AG04450 (cell line): ENCODE measurements at regions of chr17 and their contacts with region 1.

Region 1: DNA sequence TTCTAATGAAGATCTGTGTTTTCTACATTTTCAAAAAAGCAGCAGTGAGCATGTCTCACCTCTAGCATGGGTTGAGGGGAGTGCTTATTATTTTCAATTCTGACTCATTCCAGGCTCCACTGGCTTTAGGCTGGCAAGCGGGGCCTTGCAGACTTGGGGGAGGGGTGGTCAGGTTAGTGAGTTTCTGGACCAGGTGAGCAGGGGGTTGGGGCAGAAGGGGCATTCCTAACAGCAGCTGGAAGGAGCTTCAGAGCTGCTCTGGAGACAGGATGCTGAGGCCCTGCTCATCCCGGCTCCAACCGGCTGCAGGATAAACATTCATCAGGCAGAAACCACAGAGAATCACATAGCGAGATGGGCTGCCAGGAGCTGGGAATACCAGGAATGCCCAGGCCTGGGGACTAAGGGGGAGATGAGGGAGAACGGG is 10.5 kb upstream of the KRT19 start:
- DNase-seq: no peak
- H3K4me3 ChIP-seq: no peak overlapping the region
- H3K27ac ChIP-seq: peak overlapping the region; percentile 61
- H3K27me3 ChIP-seq: no peaks in the 10 kb centered on the region
- CTCF ChIP-seq: no peak

Region 2: DNA sequence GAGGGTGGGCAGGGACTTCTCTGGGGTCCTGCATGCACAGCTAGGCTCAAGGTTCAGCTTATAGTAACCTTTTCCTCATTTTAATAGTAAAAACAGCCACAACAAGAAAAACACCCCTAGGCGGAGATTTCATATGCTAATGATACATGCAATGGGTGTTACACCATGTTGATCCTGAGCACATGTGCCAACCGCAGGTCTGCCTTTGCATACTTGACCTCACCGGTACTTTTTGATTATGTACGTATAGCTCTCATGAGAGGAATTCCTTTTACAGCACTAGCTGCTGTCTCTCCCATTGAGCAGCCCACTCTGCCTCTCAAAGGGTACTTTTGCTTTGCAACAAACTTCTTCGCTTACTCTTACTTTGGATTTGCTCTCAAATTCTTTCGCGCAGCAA is 442.5 kb before region 1 on chr17:
- CTCF ChIA-PET with region 1: interaction called, 12 read pairs
- POLR2A ChIA-PET with region 1: no interaction called
- DNase-seq: no peak
- H3K4me3 ChIP-seq: no peak overlapping the region
- H3K27ac ChIP-seq: no peak overlapping the region
- H3K27me3 ChIP-seq: no peaks in the 10 kb centered on the region
- CTCF ChIP-seq: no peak